HepG2 (cell line): ENCODE measurements at regions of chr17 and their contacts with region 1.

Region 1: DNA sequence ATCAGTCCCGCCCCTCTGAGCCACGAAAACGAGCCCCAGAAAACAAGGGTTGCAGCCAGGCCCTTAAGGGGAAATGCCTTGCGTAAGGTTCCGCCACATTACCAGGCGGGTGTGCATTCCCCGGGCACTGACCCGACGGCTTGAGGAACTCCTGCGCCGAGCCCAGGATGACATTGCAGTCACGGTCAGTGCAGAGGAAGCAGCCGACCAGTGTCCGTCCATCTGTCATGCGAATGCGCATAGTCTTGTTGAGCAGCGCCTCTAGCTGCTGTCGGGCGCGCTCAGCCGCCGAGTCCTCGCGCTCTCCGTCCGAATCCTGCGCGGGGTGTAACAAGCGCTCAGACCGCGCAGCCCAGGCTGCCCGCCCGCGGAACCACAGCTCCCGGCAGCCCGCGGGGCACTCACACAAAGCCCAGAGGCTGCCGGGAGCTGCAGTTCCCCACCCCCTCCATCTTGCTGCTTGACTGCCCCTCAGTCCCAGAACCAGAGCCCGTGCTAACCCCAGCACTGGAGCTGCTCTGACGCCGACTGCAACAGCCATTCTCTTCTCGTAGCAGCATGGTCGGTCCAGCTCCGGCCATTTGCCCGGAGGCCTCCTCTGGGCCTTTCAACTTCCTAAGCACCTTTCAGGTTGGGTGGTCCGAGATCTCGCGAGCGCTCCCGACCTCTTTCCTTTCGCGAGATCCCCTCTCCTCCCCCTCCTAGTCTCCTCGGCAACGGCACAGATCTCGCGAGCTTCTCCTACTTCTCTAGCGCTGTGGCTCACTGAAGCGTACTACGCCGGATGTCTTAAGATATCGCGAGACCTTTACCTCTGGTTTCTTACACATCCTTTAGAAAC is at the start of gene NAA38:
- DNase-seq: peak; percentile 99
- ATAC-seq: peak; percentile 90
- H3K4me3 ChIP-seq: peak within 1 kb of the TSS; percentile 70 to 83 (median 83)
- H3K27ac ChIP-seq: peak within 1 kb of the TSS; percentile 94
- H3K4me1 ChIP-seq: peaks cover 48% of the 10 kb centered on the region
- H3K27me3 ChIP-seq: no peaks in the 10 kb centered on the region; a peak in 1 of 5 replicates
- CTCF ChIP-seq: peak; percentile 91
- EP300 ChIP-seq: 0 out of 4 replicates have a peak, but pooled peaks of 1 of the 2 experiments have one; percentile 29
- POLR2A ChIP-seq: peak; percentile 57 to 77; a peak in 3 of 4 replicates
- RAD21 ChIP-seq: peak; percentile 78
- total RNA-seq, gene NAA38: 91.6 and 105 TPM in 2 replicates

Region 2: GRCh38 chr17:7834962-7835813 is 21.9 kb before region 1 on chr17:
- CTCF ChIA-PET with region 1: interaction called, 6 read pairs
- POLR2A ChIA-PET with region 1: interaction called, 104 read pairs
- in situ Hi-C with region 1: no loop called
- intact Hi-C with region 1: loop called (anchors 2 kb)
- DNase-seq: peak; percentile 96
- ATAC-seq: peak; percentile 65
- H3K4me3 ChIP-seq: peak overlapping the region; percentile 84 to 93 (median 92)
- H3K27ac ChIP-seq: peak overlapping the region; percentile 92
- H3K4me1 ChIP-seq: peaks cover 58% of the 10 kb centered on the region
- H3K27me3 ChIP-seq: peaks cover 3 to 18% of the 10 kb centered on the region in 2 experiments; a peak in 4 of 5 replicates
- CTCF ChIP-seq: peak; percentile 92
- EP300 ChIP-seq: 0 out of 4 replicates have a peak, but pooled peaks have one; percentile 3 to 25
- POLR2A ChIP-seq: peak; percentile 46 to 57; a peak in 2 of 4 replicates
- RAD21 ChIP-seq: peak; percentile 74

Region 3: DNA sequence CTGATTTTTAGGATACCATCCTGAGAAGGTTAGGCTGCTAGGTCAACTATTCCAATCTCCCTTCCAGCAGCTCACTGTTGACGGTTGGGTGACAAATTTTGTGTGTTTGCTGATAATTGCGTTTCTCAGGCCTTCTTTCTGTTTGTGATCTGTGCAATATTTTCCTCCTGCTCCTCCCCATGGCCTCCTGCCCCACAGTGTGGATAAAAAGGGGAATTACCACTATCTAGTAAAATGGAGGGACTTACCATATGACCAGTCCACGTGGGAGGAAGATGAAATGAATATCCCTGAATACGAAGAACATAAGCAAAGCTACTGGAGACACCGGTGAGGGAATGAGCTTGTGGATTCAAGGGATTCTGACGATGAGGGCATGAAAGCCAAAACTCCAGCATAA is 40.7 kb after region 1 on chr17:
- CTCF ChIA-PET with region 1: interaction called, 39 read pairs
- POLR2A ChIA-PET with region 1: no interaction called
- in situ Hi-C with region 1: loop called (anchors 5 kb)
- intact Hi-C with region 1: no loop called
- DNase-seq: peak; percentile 62
- ATAC-seq: peak; percentile 87
- H3K4me3 ChIP-seq: no peak overlapping the region
- H3K27ac ChIP-seq: no peak overlapping the region
- H3K4me1 ChIP-seq: peaks cover 15% of the 10 kb centered on the region
- H3K27me3 ChIP-seq: no peaks in the 10 kb centered on the region
- CTCF ChIP-seq: peak; percentile 74
- EP300 ChIP-seq: no peak
- POLR2A ChIP-seq: no peak
- RAD21 ChIP-seq: peak; percentile 86